ENCODE measurements at regions of chr19 and their contacts with region 1.

Region 1: GRCh38 chr19:39474139-39474622 is 6.5 kb upstream of the TIMM50 start:
- DNase-seq: peak; percentile 37
- H3K4me3 ChIP-seq: no peak overlapping the region
- H3K27ac ChIP-seq: no peak overlapping the region
- H3K4me1 ChIP-seq: no peaks in the 10 kb centered on the region
- H3K27me3 ChIP-seq: no peaks in the 10 kb centered on the region
- CTCF ChIP-seq: peak; percentile 81 to 95
- POLR2A ChIP-seq: no peak

Region 2: DNA sequence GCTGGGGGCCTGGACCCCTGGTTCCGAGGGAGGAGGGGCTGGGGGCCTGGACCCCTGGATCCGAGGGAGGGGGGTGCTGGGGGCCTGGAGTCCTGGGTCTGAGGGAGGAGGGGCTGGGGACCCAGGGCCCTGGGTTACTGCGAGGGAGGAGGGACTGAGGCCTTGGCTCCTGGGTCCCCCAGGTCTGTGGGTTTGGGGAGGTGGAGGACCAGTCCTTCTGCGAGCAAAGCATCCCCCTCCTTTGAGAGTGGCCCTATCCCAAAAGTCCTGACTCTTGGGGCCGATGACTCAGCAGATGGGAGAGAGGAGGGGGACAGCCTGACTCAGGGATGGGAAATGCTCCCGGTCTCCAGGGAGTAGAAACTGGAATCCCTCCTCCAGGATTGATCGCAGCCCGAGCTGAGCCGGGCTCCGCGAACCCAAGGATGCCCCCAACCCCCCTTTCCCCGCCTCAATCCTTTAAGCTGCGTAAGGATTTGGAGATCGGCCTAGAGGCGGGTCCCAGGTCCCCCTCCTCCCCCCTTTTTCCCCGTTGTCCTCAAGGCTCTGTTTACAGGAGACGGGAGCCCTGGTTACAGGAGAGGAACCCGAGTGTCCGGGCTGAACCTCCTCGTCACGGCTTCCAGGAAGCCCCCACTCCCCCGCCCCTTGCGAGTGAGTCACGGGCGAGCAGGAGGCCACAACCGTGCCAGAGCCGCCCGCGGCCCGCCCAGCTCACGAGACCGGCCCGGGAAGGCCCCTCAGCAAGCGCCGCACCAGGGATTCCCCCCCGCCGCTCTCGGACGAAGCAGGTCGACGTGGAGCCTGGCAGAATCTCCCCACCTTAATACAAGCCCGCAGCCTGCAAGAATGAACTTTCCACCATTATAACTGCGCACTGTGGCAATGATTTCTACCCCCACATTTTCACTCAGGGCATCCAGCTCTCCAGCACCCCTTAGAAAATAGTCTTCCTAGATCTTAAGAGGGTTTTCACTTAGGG is 70.6 kb before region 1 on chr19:
- CTCF ChIA-PET with region 1: no interaction called
- POLR2A ChIA-PET with region 1: no interaction called
- dilution Hi-C with region 1: no loop called
- intact Hi-C with region 1: no loop called
- DNase-seq: peak; percentile 100
- H3K4me3 ChIP-seq: peak overlapping the region in 1 of 3 experiments; percentile 34
- H3K27ac ChIP-seq: peak overlapping the region; percentile 89
- H3K4me1 ChIP-seq: peaks cover 31% of the 10 kb centered on the region
- H3K27me3 ChIP-seq: no peaks in the 10 kb centered on the region
- CTCF ChIP-seq: no peak
- POLR2A ChIP-seq: peak; percentile 15

Region 3: GRCh38 chr19:39445265-39446111 is 28.7 kb before region 1 on chr19 and contains the start of gene SUPT5H:
- CTCF ChIA-PET with region 1: interaction called, 8 read pairs
- POLR2A ChIA-PET with region 1: interaction called, 10 read pairs
- dilution Hi-C with region 1: no loop called
- intact Hi-C with region 1: no loop called
- DNase-seq: peak; percentile 98
- H3K4me3 ChIP-seq: peak within 1 kb of the TSS; percentile 85 to 98 (median 94)
- H3K27ac ChIP-seq: peak within 1 kb of the TSS; percentile 94
- H3K4me1 ChIP-seq: peaks cover 20% of the 10 kb centered on the region
- H3K27me3 ChIP-seq: no peaks in the 10 kb centered on the region
- CTCF ChIP-seq: no peak
- POLR2A ChIP-seq: peak; percentile 81
- total RNA-seq, gene SUPT5H: 108 and 120 TPM in 2 replicates

Region 4: GRCh38 chr19:39463403-39463802 is 10.8 kb before region 1 on chr19:
- CTCF ChIA-PET with region 1: interaction called, 17 read pairs
- POLR2A ChIA-PET with region 1: no interaction called
- dilution Hi-C with region 1: no loop called
- intact Hi-C with region 1: no loop called
- DNase-seq: no peak
- H3K4me3 ChIP-seq: no peak overlapping the region
- H3K27ac ChIP-seq: no peak overlapping the region
- H3K4me1 ChIP-seq: no peaks in the 10 kb centered on the region
- H3K27me3 ChIP-seq: no peaks in the 10 kb centered on the region
- CTCF ChIP-seq: no peak
- POLR2A ChIP-seq: no peak

Region 5: GRCh38 chr19:39502640-39503417 is 28.6 kb after region 1 on chr19:
- CTCF ChIA-PET with region 1: interaction called, 14 read pairs
- POLR2A ChIA-PET with region 1: no interaction called
- dilution Hi-C with region 1: no loop called
- intact Hi-C with region 1: no loop called
- DNase-seq: peak; percentile 67
- H3K4me3 ChIP-seq: no peak overlapping the region
- H3K27ac ChIP-seq: no peak overlapping the region
- H3K4me1 ChIP-seq: peaks cover 10% of the 10 kb centered on the region
- H3K27me3 ChIP-seq: peaks cover 31 to 32% of the 10 kb centered on the region in 2 experiments
- CTCF ChIP-seq: peak; percentile 82
- POLR2A ChIP-seq: no peak

Measured in endothelial cell of umbilical vein (primary cell).